ENCODE measurements at regions of chr2 and their contacts with region 1.

Region 1: GRCh38 chr2:98601532-98602132 is 6.7 kb downstream of the COA5 start:
- DNase-seq: peak; percentile 58 to 64
- H3K4me3 ChIP-seq: no peak overlapping the region
- H3K4me3 Mint-ChIP-seq: no peak overlapping the region
- H3K27ac Mint-ChIP-seq: no peak overlapping the region
- H3K4me1 ChIP-seq: no peaks in the 10 kb centered on the region; the same call in 1 of the 2 replicates
- H3K4me1 Mint-ChIP-seq: peaks cover 3% of the 10 kb centered on the region
- H3K27me3 ChIP-seq: no peaks in the 10 kb centered on the region
- H3K27me3 Mint-ChIP-seq: no peaks in the 10 kb centered on the region
- CTCF ChIP-seq: peak; percentile 81 to 86

Region 2: DNA sequence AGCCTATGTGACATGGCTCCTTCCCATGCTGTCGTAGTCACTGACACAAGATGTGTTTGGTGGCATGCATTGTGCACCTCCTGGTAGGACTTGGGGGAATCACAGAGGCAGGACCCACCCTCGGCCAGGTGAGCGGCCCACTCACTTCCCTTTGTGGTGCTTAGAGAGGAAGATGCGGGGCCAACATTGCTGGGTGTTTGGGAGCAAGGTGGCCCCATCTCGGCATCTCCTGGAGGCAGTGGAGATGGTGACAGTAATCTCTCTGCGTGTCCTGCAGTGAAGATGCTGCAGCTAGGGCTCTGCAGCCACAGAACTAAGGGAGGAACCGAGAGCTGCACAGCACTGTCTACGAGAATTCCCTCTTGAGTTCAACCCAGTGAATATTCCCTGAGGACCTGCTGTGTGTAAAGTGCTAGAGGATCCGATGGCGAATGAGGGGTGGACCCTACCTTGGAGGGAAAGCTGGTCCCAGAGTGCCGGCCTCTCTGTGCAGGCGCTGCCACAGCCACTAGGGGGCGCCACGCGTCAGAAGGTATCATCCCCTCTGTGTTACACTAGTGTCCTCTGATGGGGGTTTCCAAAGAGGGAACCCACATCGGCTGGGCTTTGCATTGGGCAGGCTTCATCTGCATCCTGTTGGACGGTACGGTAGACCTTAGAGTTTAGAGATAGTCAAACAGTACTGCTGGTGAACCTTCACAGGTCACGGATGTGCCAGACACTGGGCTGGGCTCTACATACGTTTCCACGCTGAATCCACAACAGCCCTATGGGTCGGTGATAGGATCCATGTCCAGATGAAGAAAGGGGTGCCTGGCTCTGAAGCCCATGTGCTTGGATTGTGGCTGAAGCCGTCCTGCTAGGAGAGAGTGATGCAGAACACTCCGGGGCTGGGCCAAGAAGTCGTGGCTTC is 32.5 kb before region 1 on chr2:
- CTCF ChIA-PET with region 1: no interaction called
- POLR2A ChIA-PET with region 1: no interaction called
- intact Hi-C with region 1: loop called (anchors 1 kb)
- DNase-seq: peak in 1 of 2 experiments; percentile 69
- H3K4me3 ChIP-seq: no peak overlapping the region
- H3K4me3 Mint-ChIP-seq: no peak overlapping the region
- H3K27ac Mint-ChIP-seq: no peak overlapping the region
- H3K4me1 ChIP-seq: no peaks in the 10 kb centered on the region
- H3K4me1 Mint-ChIP-seq: no peaks in the 10 kb centered on the region
- H3K27me3 ChIP-seq: no peaks in the 10 kb centered on the region
- H3K27me3 Mint-ChIP-seq: no peaks in the 10 kb centered on the region
- CTCF ChIP-seq: peak; percentile 93 to 96

Measured in Caco-2 (cell line).